K562 (cell line): ENCODE measurements at regions of chr6 and their contacts with region 1.

Region 1: DNA sequence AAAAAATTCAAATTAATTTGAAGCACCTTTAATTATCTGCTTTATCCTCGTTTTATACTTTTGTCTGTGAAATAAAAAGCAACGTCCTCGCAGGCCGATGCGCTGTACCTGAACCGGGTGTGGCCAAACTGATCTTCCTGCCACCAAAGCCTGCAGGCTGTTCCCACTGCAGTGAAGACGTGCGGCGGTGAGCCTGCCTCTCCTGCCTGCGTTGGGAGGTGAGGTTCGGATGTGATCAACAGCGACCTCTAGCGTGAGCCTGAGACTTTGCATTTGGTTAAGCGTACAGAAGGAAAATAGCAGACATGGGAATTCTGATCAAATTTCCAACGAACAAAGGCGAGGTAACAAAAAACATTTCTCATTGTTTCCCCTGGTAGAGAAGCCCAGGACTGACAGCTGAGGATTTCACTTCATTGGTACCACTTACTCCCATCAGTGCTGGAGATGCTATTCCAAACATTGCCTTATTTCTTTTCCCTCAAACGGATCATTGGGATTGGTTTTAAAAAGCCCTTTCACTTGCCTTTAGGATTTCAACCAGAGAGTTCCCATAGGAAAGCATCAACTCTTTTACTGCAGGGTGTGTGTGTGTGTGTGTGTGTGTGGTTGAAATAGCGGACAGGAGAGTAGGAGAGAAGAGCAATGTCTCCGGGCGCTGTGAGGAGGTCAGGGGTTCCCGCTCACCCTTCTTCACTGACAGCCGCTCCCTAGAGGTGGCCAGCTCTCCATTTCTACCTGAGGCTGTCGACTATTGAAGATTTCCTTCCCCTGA is 56.6 kb upstream of the CCN6 start:
- DNase-seq: peak; percentile 67 to 79 (median 70)
- ATAC-seq: peak; percentile 98
- H3K4me3 ChIP-seq: no peak overlapping the region
- H3K27ac ChIP-seq: no peak overlapping the region
- H3K4me1 ChIP-seq: no peaks in the 10 kb centered on the region
- H3K27me3 ChIP-seq: peaks cover 6 to 36% of the 10 kb centered on the region in 2 experiments; a peak in 3 of 5 replicates
- CTCF ChIP-seq: peak; percentile 87 to 91 (median 87)
- EP300 ChIP-seq: no peak
- POLR2A ChIP-seq: no peak
- RAD21 ChIP-seq: peak; percentile 95 to 96

Region 2: DNA sequence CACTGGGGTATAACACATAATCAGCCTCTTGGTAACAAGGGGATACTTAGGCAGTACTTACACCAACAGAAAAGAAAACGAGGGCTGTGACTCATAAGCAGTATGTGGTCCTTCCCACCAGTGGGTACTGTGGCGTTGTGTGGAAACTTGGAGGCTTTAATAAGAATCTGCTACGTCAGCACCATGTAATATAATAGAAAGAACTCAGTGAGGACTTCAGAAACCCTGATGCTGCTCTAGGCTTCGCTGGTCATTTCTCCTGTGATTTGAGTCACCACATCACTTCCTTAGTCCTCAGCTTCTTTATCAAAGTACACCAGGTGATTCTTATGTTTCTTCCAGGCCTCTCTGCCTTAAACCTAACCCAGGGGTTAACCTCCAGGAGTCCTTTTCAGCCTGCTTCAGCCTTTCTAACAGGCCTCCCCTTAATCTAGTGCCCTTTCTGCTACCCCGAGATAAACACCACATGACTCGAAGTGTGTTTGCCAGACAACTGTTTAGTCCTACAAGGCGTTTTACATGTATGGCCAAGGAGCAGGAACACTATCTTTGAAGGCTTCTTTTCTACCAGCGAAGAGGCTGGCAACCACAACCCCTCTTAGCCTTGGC is 192.5 kb before region 1 on chr6:
- CTCF ChIA-PET with region 1: no interaction called
- POLR2A ChIA-PET with region 1: no interaction called
- in situ Hi-C with region 1: no loop called
- intact Hi-C with region 1: loop called (anchors 5 kb)
- DNase-seq: peak; percentile 69 to 89 (median 76)
- ATAC-seq: peak; percentile 85
- H3K4me3 ChIP-seq: no peak overlapping the region
- H3K27ac ChIP-seq: peak overlapping the region; percentile 25; the same call in 1 of the 3 replicates
- H3K4me1 ChIP-seq: peaks cover 0 to 26% of the 10 kb centered on the region in 2 experiments; a peak in 3 of 5 replicates
- H3K27me3 ChIP-seq: no peaks in the 10 kb centered on the region; a peak in 2 of 5 replicates
- CTCF ChIP-seq: no peak; a peak in 1 of 6 replicates
- EP300 ChIP-seq: peak; percentile 83
- POLR2A ChIP-seq: no peak
- RAD21 ChIP-seq: peak; percentile 30 to 37; a peak in 3 of 4 replicates

Region 3: GRCh38 chr6:112043032-112044007 is 46.1 kb after region 1 on chr6:
- CTCF ChIA-PET with region 1: interaction called, 3 read pairs
- POLR2A ChIA-PET with region 1: no interaction called
- in situ Hi-C with region 1: no loop called
- intact Hi-C with region 1: loop called (anchors 5 kb)
- DNase-seq: peak; percentile 87 to 93 (median 92)
- ATAC-seq: peak; percentile 97
- H3K4me3 ChIP-seq: peak overlapping the region; percentile 49
- H3K27ac ChIP-seq: peak overlapping the region; percentile 26
- H3K4me1 ChIP-seq: peaks cover 0 to 5% of the 10 kb centered on the region in 2 experiments; a peak in 1 of 5 replicates
- H3K27me3 ChIP-seq: peaks cover 5 to 15% of the 10 kb centered on the region in 2 experiments; a peak in 4 of 5 replicates
- CTCF ChIP-seq: peak; percentile 92 to 96 (median 95)
- EP300 ChIP-seq: peak; percentile 56
- POLR2A ChIP-seq: no peak; the same call in 1 of the 2 replicates
- RAD21 ChIP-seq: peak; percentile 86 to 89